ENCODE measurements at regions of chr7 and their contacts with region 1.

Region 1: DNA sequence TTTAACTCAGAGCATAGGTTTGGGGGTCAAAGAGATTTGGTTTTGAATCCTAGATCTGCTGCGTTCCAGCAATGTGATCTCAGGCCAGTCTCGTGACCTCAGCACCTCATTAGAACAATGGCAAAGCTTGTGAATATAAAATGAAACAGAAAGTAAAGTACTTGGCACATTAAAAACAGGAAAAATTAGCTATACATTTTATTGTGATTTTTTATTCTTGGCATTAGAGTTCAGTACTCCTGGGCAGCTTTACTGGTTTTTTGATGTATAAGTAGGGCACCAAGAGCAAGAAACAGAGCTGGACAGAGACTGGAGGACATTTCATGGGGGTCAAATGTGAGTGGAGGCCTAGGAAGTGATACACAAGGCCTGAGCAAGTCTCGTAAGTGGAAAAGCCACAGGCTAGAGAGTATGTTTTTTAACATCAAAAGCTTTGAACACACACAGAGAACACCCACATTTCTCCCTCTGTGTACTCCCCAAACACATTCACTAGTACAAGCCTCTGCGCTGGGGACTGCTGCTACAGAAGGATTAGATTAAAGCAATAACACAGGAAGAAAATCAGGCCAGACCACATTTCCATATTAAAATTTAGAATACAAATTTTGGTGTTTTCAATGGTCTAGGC is 157.2 kb upstream of the SLC25A13 start:
- DNase-seq: peak in 3 of 14 experiments; percentile 13 to 36 (median 16)
- ATAC-seq: no peak
- H3K4me3 ChIP-seq: peak overlapping the region; percentile 38
- H3K4me3 Mint-ChIP-seq: peak overlapping the region; percentile 59
- H3K27ac ChIP-seq: peak overlapping the region in 1 of 2 donors; percentile 50
- H3K27ac Mint-ChIP-seq: peak overlapping the region; percentile 75
- H3K4me1 ChIP-seq: no peaks in the 10 kb centered on the region
- H3K4me1 Mint-ChIP-seq: peaks cover 16% of the 10 kb centered on the region
- H3K27me3 ChIP-seq: no peaks in the 10 kb centered on the region
- H3K27me3 Mint-ChIP-seq: no peaks in the 10 kb centered on the region
- CTCF ChIP-seq: no peak

Region 2: DNA sequence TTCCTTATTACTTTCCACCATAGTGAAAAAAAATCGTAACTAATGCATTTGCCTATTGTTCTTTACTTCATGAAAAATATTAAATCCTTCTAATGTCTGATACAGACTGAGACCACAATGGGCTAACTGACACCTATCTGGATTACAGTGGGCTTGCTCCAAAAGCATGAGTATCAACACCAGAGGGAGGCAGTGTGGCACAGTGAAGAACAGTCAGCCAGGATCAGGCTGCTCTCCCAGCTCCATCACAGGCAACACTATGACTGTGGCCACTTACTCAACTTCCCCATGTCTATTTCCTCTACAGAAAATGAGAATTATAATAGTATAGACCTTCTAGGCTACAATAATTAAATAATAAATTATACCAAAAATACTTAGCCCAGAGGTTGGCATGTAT is 254.4 kb before region 1 on chr7:
- CTCF ChIA-PET with region 1: no interaction called
- POLR2A ChIA-PET with region 1: no interaction called
- intact Hi-C with region 1: loop called in 1 of 2 experiments (anchors 10 kb)
- DNase-seq: peak in 2 of 14 experiments; percentile 18 to 24
- ATAC-seq: no peak
- H3K4me3 ChIP-seq: no peak overlapping the region
- H3K4me3 Mint-ChIP-seq: no peak overlapping the region
- H3K27ac ChIP-seq: no peak overlapping the region
- H3K27ac Mint-ChIP-seq: no peak overlapping the region
- H3K4me1 ChIP-seq: no peaks in the 10 kb centered on the region
- H3K4me1 Mint-ChIP-seq: peaks cover 7% of the 10 kb centered on the region
- H3K27me3 ChIP-seq: no peaks in the 10 kb centered on the region
- H3K27me3 Mint-ChIP-seq: no peaks in the 10 kb centered on the region
- CTCF ChIP-seq: no peak

Region 3: DNA sequence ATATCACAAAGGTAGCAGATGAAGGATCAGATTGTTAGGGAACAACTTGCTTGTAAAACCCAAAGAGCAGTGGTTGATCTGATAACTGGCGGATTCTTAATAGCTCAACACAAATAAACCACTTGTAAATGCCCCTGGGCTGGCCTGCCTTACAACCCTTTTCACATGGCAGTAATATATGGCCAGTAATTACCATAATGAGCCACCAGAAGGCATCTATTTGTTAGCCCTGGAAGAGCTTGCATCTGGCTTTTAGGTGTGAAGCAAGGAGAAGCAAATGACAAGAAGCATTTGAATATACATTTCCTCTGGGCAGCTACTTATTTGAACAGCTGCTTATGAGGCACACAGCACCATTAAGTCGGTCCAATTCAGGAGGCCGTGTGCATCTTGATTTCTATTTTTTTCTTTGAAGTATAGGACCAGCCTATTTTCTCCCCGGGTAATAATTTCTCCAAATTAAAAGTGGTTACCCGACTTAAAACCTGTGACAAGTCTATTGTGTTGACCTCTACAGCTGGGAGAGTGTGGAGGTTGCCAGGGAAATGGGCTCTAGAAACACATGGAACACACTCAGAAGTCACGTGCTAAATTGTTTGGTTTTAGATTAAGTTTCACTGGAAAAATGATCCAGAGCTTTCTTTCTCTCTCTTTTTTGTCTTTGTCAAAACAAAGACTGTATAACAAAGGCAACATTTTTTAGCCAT is 117.1 kb after region 1 on chr7:
- CTCF ChIA-PET with region 1: no interaction called
- POLR2A ChIA-PET with region 1: no interaction called
- intact Hi-C with region 1: no loop called
- DNase-seq: peak in 3 of 14 experiments; percentile 1 to 8 (median 4)
- ATAC-seq: no peak
- H3K4me3 ChIP-seq: no peak overlapping the region
- H3K4me3 Mint-ChIP-seq: no peak overlapping the region
- H3K27ac ChIP-seq: no peak overlapping the region
- H3K27ac Mint-ChIP-seq: no peak overlapping the region
- H3K4me1 ChIP-seq: no peaks in the 10 kb centered on the region
- H3K4me1 Mint-ChIP-seq: no peaks in the 10 kb centered on the region
- H3K27me3 ChIP-seq: peaks cover 0 to 6% of the 10 kb centered on the region in 2 experiments
- H3K27me3 Mint-ChIP-seq: peaks cover 30% of the 10 kb centered on the region
- CTCF ChIP-seq: no peak

Measured in CD4-positive, alpha-beta T cell (primary cell).